Right ventricle myocardium inferior (tissue), 1 donor: ENCODE measurements at regions of chr17 and their contacts with region 1.

Region 1: DNA sequence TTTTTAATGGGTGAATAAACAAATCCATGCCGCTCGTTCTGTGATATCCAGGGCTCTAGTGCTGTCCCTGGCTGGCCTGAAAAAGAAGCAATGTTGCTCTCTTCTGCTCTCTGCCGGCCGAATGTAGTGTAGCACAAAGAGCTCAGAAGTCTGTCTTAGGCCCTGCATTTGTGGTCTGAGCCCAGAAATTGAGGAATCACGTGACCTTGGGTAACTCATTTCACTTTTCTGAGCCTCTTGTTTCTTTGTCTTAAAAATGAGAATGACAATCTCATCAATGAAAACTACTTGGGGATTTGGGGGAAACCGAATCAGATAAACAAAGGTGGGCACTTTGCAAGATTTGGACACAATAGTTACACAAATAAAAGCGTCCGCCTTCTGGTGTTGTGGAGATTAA is 381.6 kb upstream of the ASIC2 start:
- DNase-seq: no peak
- ATAC-seq: peak; percentile 89

Region 2: DNA sequence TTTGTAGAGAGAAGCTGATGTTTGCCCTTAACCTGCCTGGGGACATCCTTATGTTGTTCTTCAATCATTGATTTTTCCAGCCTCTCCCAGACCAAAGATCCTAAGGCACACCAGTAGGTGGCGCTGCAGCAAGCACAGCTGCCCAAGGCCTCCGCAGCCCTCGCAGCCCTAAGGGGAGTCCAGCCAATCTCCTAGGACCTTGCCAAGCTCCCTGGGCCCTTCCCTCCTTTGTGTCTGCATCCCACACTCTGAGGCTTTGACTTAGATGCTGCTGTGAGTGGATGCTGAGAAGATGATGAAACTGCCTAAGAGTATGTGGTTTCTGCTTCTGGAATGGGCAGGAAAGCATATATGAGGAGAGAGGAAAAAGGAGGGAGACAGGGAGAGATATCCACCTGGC is 635.9 kb before region 1 on chr17:
- intact Hi-C with region 1: loop called (anchors 5 kb)
- DNase-seq: no peak
- ATAC-seq: no peak

Region 3: GRCh38 chr17:33520426-33521330 is 154.0 kb before region 1 on chr17:
- intact Hi-C with region 1: loop called (anchors 1 kb)
- DNase-seq: no peak
- ATAC-seq: peak; percentile 40